ENCODE measurements at regions of chr7 and their contacts with region 1.

Region 1: DNA sequence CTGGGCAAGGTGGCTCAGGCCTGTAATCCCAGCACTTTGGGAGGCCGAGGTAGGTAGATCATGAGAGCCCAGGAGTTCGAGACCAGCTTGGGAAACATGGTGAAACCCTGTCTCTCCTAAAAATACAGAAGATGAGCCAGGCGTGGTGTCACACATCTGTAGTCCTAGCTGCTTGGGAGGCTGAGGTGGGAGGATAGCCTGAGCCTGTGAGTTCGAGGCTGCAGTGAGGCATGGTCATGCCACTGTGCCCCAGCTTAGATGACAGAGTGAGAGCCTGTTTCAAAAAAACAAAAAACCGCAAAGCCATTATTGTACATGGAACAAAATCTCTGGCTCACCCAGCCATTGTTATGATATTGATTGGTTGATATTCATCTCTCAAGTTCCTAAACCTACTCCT is 53.7 kb downstream of the KMT2E start:
- DNase-seq: no peak
- ATAC-seq: no peak
- H3K4me3 ChIP-seq: no peak overlapping the region
- H3K27ac ChIP-seq: no peak overlapping the region
- H3K4me1 ChIP-seq: no peaks in the 10 kb centered on the region
- H3K27me3 ChIP-seq: no peaks in the 10 kb centered on the region
- CTCF ChIP-seq: no peak
- POLR2A ChIP-seq: no peak

Region 2: DNA sequence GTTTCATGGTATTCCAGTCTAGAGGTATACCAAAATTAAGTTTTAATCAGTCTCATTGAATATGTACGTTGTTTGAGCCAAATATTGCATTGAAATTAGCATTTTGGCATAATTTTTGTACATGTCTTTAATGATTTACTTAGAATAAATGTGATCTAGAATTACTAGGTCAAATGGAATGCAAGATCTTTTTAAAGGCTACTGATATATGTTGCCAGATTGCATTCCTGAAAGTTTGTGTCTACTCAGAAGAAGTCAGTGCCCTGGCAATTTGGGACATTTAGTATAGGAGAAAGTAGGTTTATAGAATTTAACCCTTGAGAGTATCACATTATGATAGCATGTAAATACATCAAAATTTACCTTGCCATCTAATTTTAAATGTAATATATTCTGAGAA is 21.3 kb before region 1 on chr7:
- in situ Hi-C with region 1: no loop called
- intact Hi-C with region 1: loop called (anchors 1 kb)
- DNase-seq: no peak
- ATAC-seq: no peak
- H3K4me3 ChIP-seq: no peak overlapping the region
- H3K27ac ChIP-seq: peak overlapping the region in 2 of 4 donors; percentile 7 to 10
- H3K4me1 ChIP-seq: peaks cover 39 to 40% of the 10 kb centered on the region in 2 donors
- H3K27me3 ChIP-seq: no peaks in the 10 kb centered on the region
- CTCF ChIP-seq: no peak
- POLR2A ChIP-seq: no peak

Region 3: DNA sequence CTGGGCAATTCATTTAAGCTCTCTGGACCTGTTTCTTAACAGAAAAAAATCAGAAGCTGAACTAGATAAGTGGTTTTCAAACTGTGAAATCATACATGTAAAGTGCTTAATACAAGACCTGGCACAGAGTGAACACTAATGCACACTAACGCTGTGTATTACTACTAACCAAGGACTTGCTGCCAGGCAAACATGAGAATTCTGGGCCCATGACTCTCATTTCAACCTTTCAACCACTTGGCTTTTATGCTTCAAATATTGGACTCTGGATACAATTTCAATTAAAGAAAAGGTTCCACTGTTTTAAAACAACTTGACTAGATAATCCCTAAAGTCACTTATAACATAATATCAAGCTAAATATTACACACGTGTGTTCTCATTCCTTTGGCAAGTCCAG is 247.7 kb after region 1 on chr7:
- in situ Hi-C with region 1: no loop called
- intact Hi-C with region 1: no loop called
- DNase-seq: no peak
- ATAC-seq: peak in 1 of 2 donors; percentile 79
- H3K4me3 ChIP-seq: no peak overlapping the region
- H3K27ac ChIP-seq: peak overlapping the region in 3 of 4 donors; percentile 10 to 32 (median 25)
- H3K4me1 ChIP-seq: peaks cover 10 to 18% of the 10 kb centered on the region in 2 donors
- H3K27me3 ChIP-seq: no peaks in the 10 kb centered on the region
- CTCF ChIP-seq: no peak
- POLR2A ChIP-seq: no peak